ENCODE measurements at regions of chr11 and their contacts with region 1.

Region 1: DNA sequence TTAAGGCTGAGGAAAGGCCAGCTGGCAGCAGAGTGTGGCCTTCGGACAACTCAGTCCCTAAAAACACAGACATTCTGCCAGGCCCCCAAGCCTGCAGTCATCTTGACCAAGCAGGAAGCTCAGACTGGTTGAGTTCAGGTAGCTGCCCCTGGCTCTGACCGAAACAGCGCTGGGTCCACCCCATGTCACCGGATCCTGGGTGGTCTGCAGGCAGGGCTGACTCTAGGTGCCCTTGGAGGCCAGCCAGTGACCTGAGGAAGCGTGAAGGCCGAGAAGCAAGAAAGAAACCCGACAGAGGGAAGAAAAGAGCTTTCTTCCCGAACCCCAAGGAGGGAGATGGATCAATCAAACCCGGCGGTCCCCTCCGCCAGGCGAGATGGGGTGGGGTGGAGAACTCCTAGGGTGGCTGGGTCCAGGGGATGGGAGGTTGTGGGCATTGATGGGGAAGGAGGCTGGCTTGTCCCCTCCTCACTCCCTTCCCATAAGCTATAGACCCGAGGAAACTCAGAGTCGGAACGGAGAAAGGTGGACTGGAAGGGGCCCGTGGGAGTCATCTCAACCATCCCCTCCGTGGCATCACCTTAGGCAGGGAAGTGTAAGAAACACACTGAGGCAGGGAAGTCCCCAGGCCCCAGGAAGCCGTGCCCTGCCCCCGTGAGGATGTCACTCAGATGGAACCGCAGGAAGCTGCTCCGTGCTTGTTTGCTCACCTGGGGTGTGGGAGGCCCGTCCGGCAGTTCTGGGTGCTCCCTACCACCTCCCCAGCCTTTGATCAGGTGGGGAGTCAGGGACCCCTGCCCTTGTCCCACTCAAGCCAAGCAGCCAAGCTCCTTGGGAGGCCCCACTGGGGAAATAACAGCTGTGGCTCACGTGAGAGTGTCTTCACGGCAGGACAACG is 11.7 kb downstream of the CXCR5 start:
- DNase-seq: peak; percentile 88
- ATAC-seq: peak; percentile 86
- H3K4me3 Mint-ChIP-seq: peak overlapping the region; percentile 52
- H3K27ac Mint-ChIP-seq: peak overlapping the region; percentile 92
- H3K4me1 Mint-ChIP-seq: peaks cover 72% of the 10 kb centered on the region
- H3K27me3 Mint-ChIP-seq: no peaks in the 10 kb centered on the region

Region 2: GRCh38 chr11:118878163-118878563 is 17.2 kb before region 1 on chr11:
- CTCF ChIA-PET with region 1: interaction called, 5 read pairs
- POLR2A ChIA-PET with region 1: interaction called, 12 read pairs
- intact Hi-C with region 1: loop called in 1 of 2 experiments (anchors 2 kb)
- DNase-seq: peak; percentile 54
- ATAC-seq: peak; percentile 17
- H3K4me3 Mint-ChIP-seq: peak overlapping the region; percentile 36
- H3K27ac Mint-ChIP-seq: peak overlapping the region; percentile 98
- H3K4me1 Mint-ChIP-seq: peaks cover 97% of the 10 kb centered on the region
- H3K27me3 Mint-ChIP-seq: no peaks in the 10 kb centered on the region